Left cardiac atrium (tissue), 4 donors: ENCODE measurements at regions of chr18 and their contacts with region 1.

Region 1: DNA sequence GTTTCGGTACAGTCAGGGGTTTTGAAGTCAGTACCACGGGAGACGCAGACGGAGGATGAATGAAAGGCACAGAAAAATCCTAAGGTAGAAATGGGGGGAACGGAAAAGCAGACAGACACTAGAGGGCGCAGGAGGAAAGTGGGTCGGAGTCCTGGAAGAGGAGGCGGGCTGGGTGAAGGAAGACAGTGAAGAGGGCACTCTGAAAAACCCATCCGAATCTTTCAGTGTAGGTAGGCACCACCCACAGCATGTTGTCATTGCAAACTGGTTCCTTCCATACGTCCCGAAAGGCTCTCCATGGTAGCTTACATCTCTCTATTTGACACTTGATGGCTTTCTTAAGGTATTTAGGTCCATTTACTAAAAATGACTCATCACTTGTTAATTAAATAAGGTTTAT is 18.5 kb upstream of the ZNF236 start:
- DNase-seq: peak; percentile 59
- ATAC-seq: peak; percentile 63 to 66

Region 2: GRCh38 chr18:76875390-76876325 is 71.8 kb after region 1 on chr18:
- intact Hi-C with region 1: loop called in 1 of 2 experiments (anchors 5 kb)
- DNase-seq: no peak
- ATAC-seq: peak in 1 of 2 donors; percentile 49

Region 3: GRCh38 chr18:76982841-76983587 is 179.2 kb after region 1 on chr18:
- intact Hi-C with region 1: loop called in 1 of 2 experiments (anchors 10 kb)
- DNase-seq: peak; percentile 84
- ATAC-seq: peak; percentile 82 to 91

Region 4: GRCh38 chr18:77650799-77651385 is 847.1 kb after region 1 on chr18:
- intact Hi-C with region 1: loop called in 1 of 2 experiments (anchors 5 kb)
- DNase-seq: peak; percentile 76
- ATAC-seq: peak; percentile 84 to 97

Region 5: GRCh38 chr18:77702686-77703085 is 898.9 kb after region 1 on chr18:
- intact Hi-C with region 1: loop called in 1 of 2 experiments (anchors 10 kb)
- DNase-seq: no peak
- ATAC-seq: no peak